ENCODE measurements at regions of chr15 and their contacts with region 1.

Region 1: GRCh38 chr15:63122002-63122893 is 587 bp downstream of the LACTB start:
- DNase-seq: peak; percentile 48 to 91 (median 65)
- ATAC-seq: peak; percentile 71
- H3K4me3 ChIP-seq: peak overlapping the region; percentile 90
- H3K4me3 Mint-ChIP-seq: peak overlapping the region; percentile 96
- H3K27ac ChIP-seq: peak overlapping the region; percentile 64 to 67
- H3K27ac Mint-ChIP-seq: peak overlapping the region; percentile 89
- H3K4me1 ChIP-seq: peaks cover 10% of the 10 kb centered on the region
- H3K4me1 Mint-ChIP-seq: peaks cover 17% of the 10 kb centered on the region
- H3K27me3 ChIP-seq: no peaks in the 10 kb centered on the region
- H3K27me3 Mint-ChIP-seq: no peaks in the 10 kb centered on the region
- CTCF ChIP-seq: no peak

Region 2: DNA sequence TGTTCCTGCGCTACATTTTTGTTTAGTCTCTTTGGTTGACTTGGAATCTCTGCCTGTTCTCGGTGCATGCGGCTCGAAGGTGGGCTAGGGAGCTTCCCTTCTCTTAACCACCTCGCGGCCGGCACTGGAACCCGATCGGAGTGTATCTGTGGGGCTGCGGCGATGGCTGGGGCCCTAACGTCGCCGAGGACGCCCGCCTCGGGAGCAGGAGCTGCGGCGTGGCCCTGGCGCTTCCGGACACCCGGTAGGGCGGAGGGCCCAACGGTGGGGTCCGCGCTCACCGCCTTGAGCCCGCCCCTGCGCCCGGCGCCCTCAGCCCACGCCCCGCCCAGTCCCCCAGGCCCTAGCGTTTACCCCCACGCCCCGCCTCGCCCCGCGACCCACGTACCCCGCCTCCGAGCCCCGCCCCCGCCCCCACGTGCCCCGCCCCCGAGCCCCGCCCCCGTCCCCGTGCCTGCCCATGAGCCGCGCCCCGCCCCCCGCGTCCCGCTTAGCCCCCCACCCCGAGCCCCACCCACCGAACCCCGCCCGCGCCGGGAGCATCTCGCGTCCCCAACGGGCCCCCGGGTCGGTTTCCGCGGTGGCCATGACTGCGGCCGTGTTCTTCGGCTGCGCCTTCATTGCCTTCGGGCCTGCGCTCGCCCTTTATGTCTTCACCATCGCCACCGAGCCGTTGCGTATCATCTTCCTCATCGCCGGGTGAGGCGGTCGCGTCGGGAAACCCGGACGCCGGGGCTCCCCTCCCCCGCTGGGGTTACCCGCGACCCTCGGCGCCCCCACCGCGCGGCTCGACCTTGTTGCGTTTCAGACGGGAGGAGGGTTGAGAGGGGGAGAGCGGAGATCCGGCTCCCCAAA is 155.0 kb after region 1 on chr15 and contains the start of gene APH1B:
- CTCF ChIA-PET with region 1: no interaction called
- POLR2A ChIA-PET with region 1: interaction called, 3 read pairs
- intact Hi-C with region 1: loop called in 1 of 2 experiments (anchors 2 kb)
- DNase-seq: peak; percentile 61 to 94 (median 79)
- ATAC-seq: peak; percentile 88
- H3K4me3 ChIP-seq: peak within 1 kb of the TSS; percentile 86
- H3K4me3 Mint-ChIP-seq: peak within 1 kb of the TSS; percentile 91
- H3K27ac ChIP-seq: peak within 1 kb of the TSS; percentile 71 to 80
- H3K27ac Mint-ChIP-seq: peak within 1 kb of the TSS; percentile 82
- H3K4me1 ChIP-seq: peaks cover 25% of the 10 kb centered on the region
- H3K4me1 Mint-ChIP-seq: peaks cover 48% of the 10 kb centered on the region
- H3K27me3 ChIP-seq: no peaks in the 10 kb centered on the region
- H3K27me3 Mint-ChIP-seq: no peaks in the 10 kb centered on the region
- CTCF ChIP-seq: no peak
- total RNA-seq, gene APH1B: 9.3 to 11.6 TPM

Measured in CD4-positive, alpha-beta T cell (primary cell).